AG04450 (cell line): ENCODE measurements at regions of chr17 and their contacts with region 1.

Region 1: DNA sequence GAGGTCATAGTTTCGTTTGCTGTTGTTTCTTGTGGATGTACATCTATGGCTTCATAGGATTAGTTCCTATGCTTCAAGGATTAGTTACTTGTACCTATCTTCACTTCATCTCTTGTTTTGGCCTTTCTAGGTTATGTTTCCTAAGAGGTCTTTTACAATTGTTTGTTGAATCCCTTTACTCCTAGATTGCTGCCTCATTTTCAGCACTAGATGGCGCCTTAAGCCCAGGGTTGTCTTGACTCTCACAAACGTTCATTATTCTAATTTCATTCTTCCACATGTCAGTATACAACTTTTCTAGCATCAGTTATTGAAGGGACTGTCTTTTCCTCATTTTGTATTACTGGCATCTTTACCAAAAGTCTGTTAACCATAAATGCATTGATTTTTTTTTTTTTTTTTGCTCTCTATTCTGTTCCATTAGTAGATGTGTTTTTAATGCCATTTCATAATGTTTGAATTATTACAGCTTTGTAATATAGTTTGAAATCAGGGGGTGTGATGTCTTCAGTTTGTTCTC is 45.0 kb upstream of the NACA2 start:
- DNase-seq: peak; percentile 29
- H3K4me3 ChIP-seq: no peak overlapping the region
- H3K27ac ChIP-seq: no peak overlapping the region
- H3K27me3 ChIP-seq: no peaks in the 10 kb centered on the region
- CTCF ChIP-seq: peak; percentile 83

Region 2: DNA sequence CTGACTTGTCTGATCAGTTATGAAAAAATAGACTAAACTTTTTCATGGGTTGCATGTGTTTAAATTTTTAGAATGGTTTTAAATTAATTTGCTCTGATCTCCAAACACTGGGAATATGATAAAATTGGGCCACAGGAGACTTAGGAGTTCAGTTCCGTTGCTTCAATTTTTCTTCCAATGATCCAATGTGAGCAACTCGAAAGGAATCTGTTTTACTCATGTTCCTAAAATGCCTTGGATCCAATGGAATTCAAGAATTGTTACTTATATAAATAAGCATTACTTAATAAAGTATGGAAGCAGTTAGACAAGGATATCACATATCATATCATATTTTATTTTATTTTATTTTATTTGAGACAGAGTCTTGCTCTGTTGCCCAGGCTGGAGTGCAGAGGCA is 11.1 kb after region 1 on chr17:
- CTCF ChIA-PET with region 1: interaction called, 25 read pairs
- POLR2A ChIA-PET with region 1: no interaction called
- DNase-seq: no peak
- H3K4me3 ChIP-seq: no peak overlapping the region
- H3K27ac ChIP-seq: peak overlapping the region; percentile 22
- H3K27me3 ChIP-seq: no peaks in the 10 kb centered on the region
- CTCF ChIP-seq: no peak

Region 3: DNA sequence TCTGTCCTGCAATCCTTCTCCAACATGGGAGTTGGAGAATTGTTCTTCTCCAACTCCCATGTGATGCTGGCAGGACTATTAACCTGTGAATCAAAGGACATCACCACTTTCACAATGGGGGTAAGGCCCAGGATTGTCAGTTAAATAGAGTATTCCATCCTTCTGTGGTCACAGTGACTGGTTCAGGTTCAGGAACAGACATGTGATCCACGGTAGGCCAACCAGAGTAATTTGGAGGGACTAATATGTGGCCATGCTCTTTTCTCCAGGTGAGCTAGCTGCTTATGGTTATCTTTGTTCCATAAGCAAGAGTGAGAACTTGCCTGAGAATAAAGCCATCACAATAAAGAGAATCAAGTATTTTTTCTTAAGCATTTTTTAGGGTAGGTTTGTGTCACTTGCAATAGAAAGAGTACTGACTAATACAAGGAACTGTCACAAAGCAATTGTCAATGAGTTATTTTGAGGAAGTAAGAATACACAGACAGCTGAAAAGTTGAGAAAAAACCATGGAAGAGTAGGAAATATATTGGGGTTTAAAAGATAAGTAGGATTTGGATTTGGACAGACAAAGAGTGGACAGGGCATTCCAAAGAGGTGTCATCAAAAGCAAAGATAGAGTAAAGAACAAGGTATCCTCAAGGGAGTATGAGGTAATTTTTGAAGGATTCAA is 164.0 kb after region 1 on chr17:
- CTCF ChIA-PET with region 1: no interaction called
- POLR2A ChIA-PET with region 1: no interaction called
- DNase-seq: no peak
- H3K4me3 ChIP-seq: no peak overlapping the region
- H3K27ac ChIP-seq: no peak overlapping the region
- H3K27me3 ChIP-seq: no peaks in the 10 kb centered on the region
- CTCF ChIP-seq: no peak

Region 4: GRCh38 chr17:61843435-61843834 is 207.5 kb after region 1 on chr17:
- CTCF ChIA-PET with region 1: interaction called, 23 read pairs
- POLR2A ChIA-PET with region 1: no interaction called
- DNase-seq: no peak
- H3K4me3 ChIP-seq: no peak overlapping the region
- H3K27ac ChIP-seq: no peak overlapping the region
- H3K27me3 ChIP-seq: no peaks in the 10 kb centered on the region
- CTCF ChIP-seq: no peak